ENCODE measurements at regions of chr3 and their contacts with region 1.

Region 1: DNA sequence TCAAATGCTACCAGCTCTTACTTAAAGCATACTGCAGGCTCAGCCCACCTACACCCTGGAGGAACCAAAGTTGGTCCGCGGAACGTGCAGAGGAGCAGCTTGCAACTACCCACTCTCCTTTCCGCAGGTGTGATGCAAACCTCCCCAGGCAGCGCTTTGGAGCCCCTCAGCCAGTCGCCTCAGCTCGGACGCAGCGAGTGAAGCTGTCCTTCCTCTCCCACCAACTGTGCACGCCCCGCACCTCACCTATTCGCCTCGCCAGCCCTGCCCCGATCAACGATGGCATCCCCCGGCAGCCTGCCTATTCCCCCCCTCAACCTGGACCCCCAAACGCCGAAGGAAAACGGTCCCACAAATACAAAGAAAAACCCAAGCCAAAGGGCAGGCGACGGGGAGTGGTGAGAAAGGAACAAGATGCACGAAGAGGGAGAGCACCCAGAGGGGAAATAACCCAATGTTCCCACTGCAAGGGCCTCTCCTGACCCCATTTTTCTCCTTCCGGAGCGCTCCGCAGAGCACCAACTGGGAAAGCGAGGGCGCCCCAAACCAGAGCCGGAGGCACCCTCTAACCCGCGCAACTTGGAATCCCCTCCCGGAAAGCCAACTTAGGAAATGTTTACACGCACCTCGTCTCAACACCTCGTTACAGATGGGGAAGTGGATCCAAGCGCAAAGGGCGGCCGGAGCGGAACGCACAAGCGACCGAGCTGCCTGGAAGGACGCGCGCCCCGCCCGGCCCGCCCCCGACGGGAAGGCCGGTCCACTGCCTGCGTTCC is 665 bp downstream of the GLB1 start:
- DNase-seq: peak; percentile 39
- H3K4me3 Mint-ChIP-seq: peak overlapping the region; percentile 97
- H3K27ac Mint-ChIP-seq: peak overlapping the region; percentile 86
- H3K4me1 Mint-ChIP-seq: peaks cover 43% of the 10 kb centered on the region
- H3K27me3 Mint-ChIP-seq: peaks cover 2% of the 10 kb centered on the region

Region 2: GRCh38 chr3:33113772-33114621 is 17.7 kb after region 1 on chr3 and contains the start of gene CRTAP:
- intact Hi-C with region 1: loop called (anchors 1 kb)
- DNase-seq: peak; percentile 78
- H3K4me3 Mint-ChIP-seq: peak within 1 kb of the TSS; percentile 87
- H3K27ac Mint-ChIP-seq: peak within 1 kb of the TSS; percentile 74
- H3K4me1 Mint-ChIP-seq: peaks cover 26% of the 10 kb centered on the region
- H3K27me3 Mint-ChIP-seq: no peaks in the 10 kb centered on the region
- total RNA-seq, gene CRTAP: 30.3 and 33.2 TPM in 2 replicates